Endothelial cell of umbilical vein (primary cell): ENCODE measurements at regions of chr11 and their contacts with region 1.

Region 1: DNA sequence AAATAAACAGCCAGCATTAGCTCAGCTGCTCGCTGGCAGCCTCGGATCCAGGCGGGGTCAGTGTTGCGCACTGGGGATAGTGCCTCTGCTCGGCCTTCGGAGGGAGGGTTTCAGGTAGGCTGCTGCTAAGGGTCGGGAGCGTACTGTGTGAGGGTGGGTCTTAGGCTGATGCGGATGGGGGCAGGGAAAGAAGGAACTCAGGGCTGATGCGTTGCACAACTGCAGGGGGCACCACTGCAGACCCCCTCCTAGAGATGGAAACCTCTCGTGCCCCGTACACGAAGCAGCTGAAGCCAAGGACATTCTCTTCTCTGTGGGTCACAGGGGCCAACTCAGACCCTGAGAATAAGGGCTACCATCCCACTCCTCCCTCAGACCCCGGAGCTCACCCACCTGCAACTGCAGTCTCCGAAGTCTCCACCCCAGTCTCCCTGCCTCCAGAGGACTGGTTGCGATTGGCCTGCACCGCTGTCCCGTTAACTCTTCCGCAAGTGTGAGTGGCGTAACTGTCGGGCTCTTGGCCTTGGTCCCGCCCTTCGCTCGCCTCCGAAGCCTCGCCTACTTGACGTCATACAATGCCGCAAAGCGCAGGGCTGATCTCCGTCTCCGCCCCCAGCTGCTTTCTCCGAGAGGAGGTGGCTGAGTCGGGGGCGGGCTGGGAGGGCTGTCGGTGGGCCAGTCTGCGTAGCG is at the start of gene KBTBD3:
- DNase-seq: peak; percentile 100
- H3K4me3 ChIP-seq: peak within 1 kb of the TSS; percentile 25 to 96 (median 86)
- H3K27ac ChIP-seq: peak within 1 kb of the TSS; percentile 65
- H3K4me1 ChIP-seq: peaks cover 14% of the 10 kb centered on the region
- H3K27me3 ChIP-seq: no peaks in the 10 kb centered on the region
- CTCF ChIP-seq: peak; percentile 37 to 64
- POLR2A ChIP-seq: peak; percentile 28
- total RNA-seq, gene KBTBD3: 2.4 and 3.6 TPM in 2 replicates

Region 2: GRCh38 chr11:105937331-105937730 is 139.7 kb before region 1 on chr11:
- CTCF ChIA-PET with region 1: no interaction called
- POLR2A ChIA-PET with region 1: no interaction called
- dilution Hi-C with region 1: no loop called
- intact Hi-C with region 1: loop called (anchors 1 kb)
- DNase-seq: no peak
- H3K4me3 ChIP-seq: no peak overlapping the region
- H3K27ac ChIP-seq: peak overlapping the region; percentile 22
- H3K4me1 ChIP-seq: peaks cover 32% of the 10 kb centered on the region
- H3K27me3 ChIP-seq: peaks cover 0 to 7% of the 10 kb centered on the region in 2 experiments
- CTCF ChIP-seq: no peak
- POLR2A ChIP-seq: no peak

Region 3: GRCh38 chr11:106021967-106022794 is 54.9 kb before region 1 on chr11 and contains the start of gene MSANTD4:
- CTCF ChIA-PET with region 1: no interaction called
- POLR2A ChIA-PET with region 1: no interaction called
- dilution Hi-C with region 1: no loop called
- intact Hi-C with region 1: loop called (anchors 1 kb)
- DNase-seq: peak; percentile 99
- H3K4me3 ChIP-seq: peak within 1 kb of the TSS; percentile 59 to 97 (median 87)
- H3K27ac ChIP-seq: peak within 1 kb of the TSS; percentile 63
- H3K4me1 ChIP-seq: peaks cover 17% of the 10 kb centered on the region
- H3K27me3 ChIP-seq: no peaks in the 10 kb centered on the region
- CTCF ChIP-seq: no peak
- POLR2A ChIP-seq: peak; percentile 78
- total RNA-seq, gene MSANTD4: 13.8 and 15.0 TPM in 2 replicates

Region 4: DNA sequence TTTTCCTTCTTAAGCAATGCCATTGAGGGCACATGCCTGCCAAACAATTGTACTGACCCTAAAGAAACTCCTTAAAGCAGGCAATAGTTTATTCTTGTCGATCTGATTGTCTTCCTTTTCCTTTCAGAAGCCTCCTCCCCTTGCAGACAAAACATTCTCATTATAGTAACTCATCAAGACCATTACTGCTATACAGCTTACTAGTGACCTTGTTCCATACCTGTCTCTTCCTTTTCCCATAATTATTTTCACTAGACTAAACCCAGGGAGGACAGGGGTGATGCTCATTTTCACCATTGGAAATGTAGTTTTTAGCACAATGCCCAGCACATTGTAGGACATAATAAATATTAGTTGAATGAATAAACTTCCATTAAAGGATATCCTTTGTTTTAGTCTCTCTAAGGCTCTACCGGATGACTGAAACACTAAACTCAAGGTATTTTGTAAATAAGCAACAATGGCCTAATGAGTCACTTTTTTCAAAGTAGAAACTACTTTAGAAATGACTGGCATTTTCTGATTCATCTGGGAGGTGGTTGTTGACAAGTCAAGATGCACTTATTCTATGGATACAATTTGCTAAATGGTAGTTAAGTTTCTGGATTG is 45.8 kb before region 1 on chr11:
- CTCF ChIA-PET with region 1: no interaction called
- POLR2A ChIA-PET with region 1: no interaction called
- dilution Hi-C with region 1: no loop called
- intact Hi-C with region 1: loop called (anchors 2 kb)
- DNase-seq: peak; percentile 63
- H3K4me3 ChIP-seq: no peak overlapping the region
- H3K27ac ChIP-seq: peak overlapping the region; percentile 40
- H3K4me1 ChIP-seq: peaks cover 22% of the 10 kb centered on the region
- H3K27me3 ChIP-seq: no peaks in the 10 kb centered on the region
- CTCF ChIP-seq: no peak
- POLR2A ChIP-seq: no peak

Region 5: GRCh38 chr11:106047636-106048035 is 29.4 kb before region 1 on chr11:
- CTCF ChIA-PET with region 1: no interaction called
- POLR2A ChIA-PET with region 1: interaction called, 3 read pairs
- dilution Hi-C with region 1: no loop called
- intact Hi-C with region 1: loop called (anchors 1 kb)
- DNase-seq: no peak
- H3K4me3 ChIP-seq: no peak overlapping the region
- H3K27ac ChIP-seq: no peak overlapping the region
- H3K4me1 ChIP-seq: no peaks in the 10 kb centered on the region
- H3K27me3 ChIP-seq: no peaks in the 10 kb centered on the region
- CTCF ChIP-seq: no peak
- POLR2A ChIP-seq: no peak

Region 6: DNA sequence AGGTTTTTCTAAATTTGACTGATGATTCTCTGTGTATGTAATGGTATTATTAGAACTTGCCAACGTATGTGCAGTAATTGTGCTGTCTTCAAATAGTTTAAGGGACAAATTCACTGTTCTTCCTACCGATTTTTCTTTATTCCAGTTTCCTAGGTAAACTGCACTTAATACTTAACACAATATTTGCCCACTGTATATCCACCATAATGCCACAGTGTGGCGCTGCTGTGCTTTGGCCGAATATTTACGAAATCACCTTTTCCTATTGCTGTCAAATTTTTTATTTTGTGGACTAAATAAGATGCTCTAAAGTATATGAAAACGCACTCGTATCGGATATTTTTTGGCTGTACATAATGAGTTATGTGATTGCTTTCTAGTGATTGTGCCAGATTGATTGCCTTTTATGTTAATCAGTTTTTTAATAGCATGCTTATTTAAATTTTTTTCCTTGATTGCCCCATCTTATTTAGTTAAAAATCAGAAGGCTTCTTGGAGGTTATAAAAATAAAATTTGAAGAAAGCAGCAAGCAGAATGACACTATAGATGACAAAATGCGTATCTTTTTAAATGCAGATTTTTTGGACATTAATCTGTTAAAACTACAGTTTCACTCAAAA is 10.9 kb after region 1 on chr11:
- CTCF ChIA-PET with region 1: interaction called, 30 read pairs
- POLR2A ChIA-PET with region 1: interaction called, 3 read pairs
- dilution Hi-C with region 1: no loop called
- intact Hi-C with region 1: loop called (anchors 1 kb)
- DNase-seq: peak; percentile 72
- H3K4me3 ChIP-seq: no peak overlapping the region
- H3K27ac ChIP-seq: no peak overlapping the region
- H3K4me1 ChIP-seq: no peaks in the 10 kb centered on the region
- H3K27me3 ChIP-seq: no peaks in the 10 kb centered on the region
- CTCF ChIP-seq: peak; percentile 64 to 68
- POLR2A ChIP-seq: no peak